ENCODE measurements at regions of chr1 and their contacts with region 1.

Region 1: DNA sequence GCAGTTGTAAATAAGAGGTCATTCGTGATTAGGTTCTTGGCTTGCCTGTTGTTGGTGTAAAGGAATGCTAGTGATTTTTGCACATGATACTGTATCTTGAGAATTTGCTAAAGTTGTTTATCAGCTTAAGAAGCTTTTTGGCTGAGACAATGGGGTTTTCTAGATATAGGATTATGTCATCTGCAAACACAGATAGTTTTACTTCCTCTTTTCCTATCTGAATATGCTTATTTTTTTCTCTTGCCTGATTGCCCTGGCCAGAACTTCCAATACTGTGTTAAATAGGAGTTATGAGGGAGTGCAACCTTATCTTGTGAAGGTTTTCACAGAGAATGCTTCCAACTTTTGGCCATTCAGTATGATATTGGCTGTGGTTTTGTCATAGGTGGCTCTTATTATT is 576.1 kb upstream of the RGS18 start:
- DNase-seq: no peak
- H3K4me3 ChIP-seq: no peak overlapping the region
- H3K27ac ChIP-seq: no peak overlapping the region
- H3K4me1 ChIP-seq: no peaks in the 10 kb centered on the region
- H3K27me3 ChIP-seq: no peaks in the 10 kb centered on the region
- CTCF ChIP-seq: no peak
- EP300 ChIP-seq: no peak
- POLR2A ChIP-seq: no peak

Region 2: GRCh38 chr1:191414981-191415640 is 167.1 kb before region 1 on chr1:
- intact Hi-C with region 1: loop called in 1 of 4 experiments (anchors 5 kb)
- DNase-seq: no peak
- H3K4me3 ChIP-seq: no peak overlapping the region
- H3K27ac ChIP-seq: no peak overlapping the region
- H3K4me1 ChIP-seq: no peaks in the 10 kb centered on the region
- H3K27me3 ChIP-seq: no peaks in the 10 kb centered on the region
- CTCF ChIP-seq: no peak
- EP300 ChIP-seq: no peak
- POLR2A ChIP-seq: no peak

Region 3: DNA sequence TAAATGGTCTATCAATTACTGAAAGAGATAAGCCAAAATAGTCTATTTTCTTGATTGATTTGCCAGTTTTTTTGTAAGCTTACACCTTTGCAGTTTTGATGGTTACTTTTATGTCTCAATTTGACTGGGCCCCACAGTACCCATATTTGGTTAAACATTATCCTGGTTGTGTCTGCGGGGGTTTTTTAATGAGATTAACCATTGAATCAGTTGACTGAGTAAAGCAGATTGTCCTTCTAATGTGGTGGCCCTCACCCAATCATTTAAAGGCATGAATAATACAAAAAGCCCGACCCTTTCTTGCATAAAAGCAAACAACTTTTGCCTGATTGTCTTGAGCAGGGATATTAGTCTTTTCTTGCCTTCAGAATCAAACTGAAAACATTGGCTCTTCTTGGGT is 73.9 kb before region 1 on chr1:
- intact Hi-C with region 1: no loop called
- DNase-seq: no peak
- H3K4me3 ChIP-seq: no peak overlapping the region
- H3K27ac ChIP-seq: no peak overlapping the region
- H3K4me1 ChIP-seq: no peaks in the 10 kb centered on the region
- H3K27me3 ChIP-seq: no peaks in the 10 kb centered on the region
- CTCF ChIP-seq: no peak
- EP300 ChIP-seq: no peak
- POLR2A ChIP-seq: no peak

Region 4: DNA sequence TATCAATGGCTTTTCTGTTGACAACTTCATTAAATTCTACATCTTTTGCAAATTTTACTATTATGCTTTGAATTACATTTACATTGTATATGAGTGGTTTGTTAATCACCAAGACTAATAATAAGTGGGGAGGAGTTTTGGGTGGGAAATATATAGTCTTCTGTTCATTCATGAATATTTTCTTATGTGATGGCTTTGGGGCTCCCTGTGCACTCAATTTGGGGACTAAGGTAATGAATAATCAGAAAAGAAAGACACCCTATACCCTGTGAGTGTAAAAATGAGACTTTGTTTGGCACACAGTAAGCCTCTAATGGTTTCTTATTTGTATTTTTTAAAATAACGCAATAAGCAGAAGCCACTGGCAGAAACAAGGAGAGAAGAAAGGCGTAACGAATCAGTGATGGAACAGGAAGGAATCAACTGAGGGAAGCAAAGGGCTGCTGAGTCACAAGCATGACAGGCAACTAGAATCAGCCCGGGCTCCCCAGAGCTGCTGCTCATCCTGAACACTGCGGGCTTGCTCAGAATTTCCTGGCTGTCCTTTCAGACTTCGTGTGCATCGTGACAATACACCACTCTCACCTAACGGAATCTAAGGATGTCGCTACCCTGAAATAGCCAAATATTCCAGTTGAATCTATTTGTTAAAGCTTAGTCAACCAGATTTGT is 1205.9 kb after region 1 on chr1:
- intact Hi-C with region 1: no loop called
- DNase-seq: peak in 1 of 5 donors; percentile 33
- H3K4me3 ChIP-seq: no peak overlapping the region
- H3K27ac ChIP-seq: no peak overlapping the region
- H3K4me1 ChIP-seq: no peaks in the 10 kb centered on the region
- H3K27me3 ChIP-seq: no peaks in the 10 kb centered on the region
- CTCF ChIP-seq: no peak
- EP300 ChIP-seq: no peak
- POLR2A ChIP-seq: no peak

Measured in ovary (tissue), 10 donors.